Activated CD8-positive, alpha-beta T cell treated with anti-CD3 and anti-CD28 coated beads for 36 hours (primary cell): ENCODE measurements at regions of chr6 and their contacts with region 1.

Region 1: DNA sequence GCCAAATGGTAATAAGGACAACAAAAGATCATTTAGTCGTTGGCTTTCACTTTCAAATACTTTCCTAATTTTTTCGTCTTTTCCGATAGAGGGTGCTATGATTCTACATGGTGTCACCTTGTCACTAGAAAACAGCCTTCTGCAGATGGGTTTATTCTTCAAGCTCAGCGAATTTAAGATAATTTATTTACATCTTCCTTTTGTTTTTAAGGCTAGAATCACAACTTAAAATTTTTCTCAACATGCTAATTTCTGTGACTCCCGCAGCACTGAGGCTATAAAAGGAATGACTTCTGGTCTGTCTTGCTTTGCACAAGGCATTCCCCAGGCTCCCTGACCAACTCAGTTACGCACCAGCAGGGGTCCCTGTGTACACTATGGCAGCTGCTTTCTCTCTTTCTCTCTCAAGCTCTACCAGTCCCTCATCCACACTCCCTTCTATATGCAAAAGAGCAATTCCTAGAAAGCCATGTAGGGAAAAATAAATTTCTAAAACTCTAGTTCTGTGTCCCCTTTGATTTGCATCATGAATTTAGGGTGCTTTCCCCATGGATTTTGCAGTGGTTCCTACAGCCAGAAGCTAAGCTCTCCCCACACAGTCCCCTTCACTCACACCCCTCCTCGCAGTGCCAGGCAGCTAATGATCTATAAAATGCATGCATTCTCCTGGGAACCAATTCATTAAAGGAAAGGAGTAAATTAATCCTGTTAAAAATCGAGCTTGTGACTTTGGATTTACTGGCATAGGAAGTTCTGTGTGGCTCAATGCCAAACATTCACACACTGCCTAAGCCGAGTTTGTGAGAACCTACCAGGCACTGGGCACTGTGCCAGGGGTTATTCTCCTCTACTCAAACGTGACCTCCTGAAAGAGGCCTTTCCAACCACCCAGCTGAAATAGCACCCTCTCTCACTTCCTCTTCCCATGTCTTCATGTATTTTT is 74.5 kb downstream of the DCDC2 start:
- DNase-seq: peak; percentile 60
- ATAC-seq: peak; percentile 88
- H3K4me3 Mint-ChIP-seq: no peak overlapping the region
- H3K27ac Mint-ChIP-seq: no peak overlapping the region
- H3K4me1 Mint-ChIP-seq: peaks cover 6% of the 10 kb centered on the region
- H3K27me3 Mint-ChIP-seq: peaks cover 2% of the 10 kb centered on the region
- CTCF ChIP-seq: peak; percentile 67

Region 2: GRCh38 chr6:23301556-23301955 is 981.8 kb before region 1 on chr6:
- CTCF ChIA-PET with region 1: no interaction called
- POLR2A ChIA-PET with region 1: no interaction called
- intact Hi-C with region 1: no loop called
- DNase-seq: no peak
- ATAC-seq: no peak
- H3K4me3 Mint-ChIP-seq: no peak overlapping the region
- H3K27ac Mint-ChIP-seq: no peak overlapping the region
- H3K4me1 Mint-ChIP-seq: no peaks in the 10 kb centered on the region
- H3K27me3 Mint-ChIP-seq: no peaks in the 10 kb centered on the region
- CTCF ChIP-seq: no peak

Region 3: GRCh38 chr6:23964865-23965264 is 318.4 kb before region 1 on chr6:
- CTCF ChIA-PET with region 1: no interaction called
- POLR2A ChIA-PET with region 1: no interaction called
- intact Hi-C with region 1: no loop called
- DNase-seq: no peak
- ATAC-seq: no peak
- H3K4me3 Mint-ChIP-seq: no peak overlapping the region
- H3K27ac Mint-ChIP-seq: no peak overlapping the region
- H3K4me1 Mint-ChIP-seq: no peaks in the 10 kb centered on the region
- H3K27me3 Mint-ChIP-seq: no peaks in the 10 kb centered on the region
- CTCF ChIP-seq: no peak

Region 4: DNA sequence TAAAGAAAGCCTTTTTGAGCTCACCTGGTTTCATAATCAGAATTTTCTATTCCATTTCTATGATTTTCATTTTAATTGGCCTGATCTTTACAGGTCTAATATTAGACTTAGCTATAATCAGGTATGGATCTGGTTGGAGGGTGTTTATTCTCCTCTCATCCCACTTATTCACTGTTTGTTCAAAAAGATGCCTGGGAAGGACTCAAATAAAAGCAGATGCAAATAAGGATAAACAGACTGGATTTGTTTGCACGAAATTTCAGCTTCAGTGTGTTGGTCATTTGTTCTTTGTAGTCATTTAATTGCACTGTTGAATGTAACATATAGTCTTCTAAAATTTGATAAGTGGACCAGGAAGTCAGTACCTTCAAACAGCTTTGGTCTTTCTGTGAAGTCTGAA is 290.2 kb before region 1 on chr6:
- CTCF ChIA-PET with region 1: no interaction called
- POLR2A ChIA-PET with region 1: no interaction called
- intact Hi-C with region 1: no loop called
- DNase-seq: no peak
- ATAC-seq: no peak
- H3K4me3 Mint-ChIP-seq: no peak overlapping the region
- H3K27ac Mint-ChIP-seq: no peak overlapping the region
- H3K4me1 Mint-ChIP-seq: no peaks in the 10 kb centered on the region
- H3K27me3 Mint-ChIP-seq: no peaks in the 10 kb centered on the region
- CTCF ChIP-seq: no peak

Region 5: GRCh38 chr6:24214922-24215452 is 68.3 kb before region 1 on chr6:
- CTCF ChIA-PET with region 1: no interaction called
- POLR2A ChIA-PET with region 1: no interaction called
- intact Hi-C with region 1: no loop called
- DNase-seq: no peak
- ATAC-seq: no peak
- H3K4me3 Mint-ChIP-seq: no peak overlapping the region
- H3K27ac Mint-ChIP-seq: no peak overlapping the region
- H3K4me1 Mint-ChIP-seq: no peaks in the 10 kb centered on the region
- H3K27me3 Mint-ChIP-seq: peaks cover 4% of the 10 kb centered on the region
- CTCF ChIP-seq: no peak

Region 6: DNA sequence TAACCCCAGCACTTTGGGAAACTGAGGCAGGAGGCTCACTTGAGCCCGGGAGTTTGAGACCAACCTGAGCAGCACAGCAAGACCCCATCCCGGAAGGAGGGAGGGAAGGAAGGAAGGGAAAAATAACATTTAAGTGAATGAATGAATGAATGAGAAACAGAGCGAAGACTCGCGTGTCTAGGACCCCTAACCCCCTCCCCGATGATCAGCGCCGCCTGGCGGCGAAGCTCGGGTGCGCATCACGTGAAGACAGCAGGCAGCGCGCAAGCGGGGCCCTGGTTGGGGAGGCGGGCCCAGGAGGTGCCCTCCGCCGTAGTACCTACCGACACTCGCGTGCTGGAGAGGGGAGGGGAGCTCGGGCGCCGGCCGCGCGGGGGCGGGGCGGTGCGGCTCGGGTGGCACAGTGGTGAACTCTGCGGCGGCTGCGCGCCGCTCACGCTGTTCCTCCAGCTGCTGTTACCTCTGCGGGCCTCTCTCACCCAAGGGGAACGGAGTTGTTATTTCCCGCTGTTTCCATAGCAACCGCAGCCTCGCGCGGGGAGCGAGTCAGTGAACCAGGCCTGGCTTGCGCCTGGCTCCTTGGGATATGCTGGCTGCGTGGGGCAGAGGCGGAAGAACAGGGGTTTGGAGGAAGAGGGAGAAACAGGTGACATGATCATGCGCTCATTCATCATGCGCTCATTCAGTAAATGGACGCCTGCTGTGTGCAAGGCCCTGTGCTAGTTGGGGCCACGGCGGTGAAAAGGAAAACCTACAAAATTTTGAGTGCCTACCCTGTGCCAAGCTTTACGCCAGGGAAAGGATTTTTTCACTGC is 76.5 kb after region 1 on chr6:
- CTCF ChIA-PET with region 1: interaction called, 13 read pairs
- POLR2A ChIA-PET with region 1: no interaction called
- intact Hi-C with region 1: no loop called
- DNase-seq: peak; percentile 89
- ATAC-seq: peak; percentile 93
- H3K4me3 Mint-ChIP-seq: peak overlapping the region; percentile 70
- H3K27ac Mint-ChIP-seq: no peak overlapping the region
- H3K4me1 Mint-ChIP-seq: peaks cover 15% of the 10 kb centered on the region
- H3K27me3 Mint-ChIP-seq: peaks cover 21% of the 10 kb centered on the region
- CTCF ChIP-seq: peak; percentile 95

Region 7: DNA sequence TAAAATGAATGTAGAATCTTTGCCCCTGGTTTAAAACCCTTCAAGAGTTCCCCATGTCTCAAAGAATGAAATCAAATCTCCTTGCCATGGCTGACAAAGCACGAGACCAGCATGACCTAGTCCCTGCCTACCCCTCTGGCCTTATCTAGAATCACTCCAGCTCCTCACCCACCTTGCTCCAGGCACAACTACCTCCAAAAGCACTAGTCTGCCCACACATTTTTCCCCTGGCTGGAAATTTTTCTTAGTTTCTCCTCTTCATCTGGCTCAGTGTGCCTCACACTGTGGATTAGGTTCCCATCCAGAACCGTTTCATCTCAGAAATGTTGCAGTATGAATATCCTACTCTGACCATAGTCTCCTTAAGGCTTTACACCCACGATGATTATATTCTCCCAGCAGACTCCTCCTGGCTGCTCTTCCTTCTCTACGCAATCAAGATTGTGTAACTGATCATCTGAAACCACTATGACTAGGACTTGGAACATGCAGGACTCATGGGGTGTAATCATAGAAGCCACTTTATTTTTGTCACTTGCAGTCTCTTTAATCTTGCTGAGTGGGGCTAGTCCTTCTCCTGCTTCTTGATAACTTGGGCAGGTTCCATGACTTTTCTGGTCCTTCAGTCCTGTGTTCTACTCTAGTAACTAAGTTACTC is 111.6 kb after region 1 on chr6:
- CTCF ChIA-PET with region 1: interaction called, 3 read pairs
- POLR2A ChIA-PET with region 1: no interaction called
- intact Hi-C with region 1: loop called (anchors 10 kb)
- DNase-seq: no peak
- ATAC-seq: no peak
- H3K4me3 Mint-ChIP-seq: no peak overlapping the region
- H3K27ac Mint-ChIP-seq: no peak overlapping the region
- H3K4me1 Mint-ChIP-seq: peaks cover 6% of the 10 kb centered on the region
- H3K27me3 Mint-ChIP-seq: peaks cover 20% of the 10 kb centered on the region
- CTCF ChIP-seq: no peak